ENCODE measurements at regions of chr15 and their contacts with region 1.

Region 1: DNA sequence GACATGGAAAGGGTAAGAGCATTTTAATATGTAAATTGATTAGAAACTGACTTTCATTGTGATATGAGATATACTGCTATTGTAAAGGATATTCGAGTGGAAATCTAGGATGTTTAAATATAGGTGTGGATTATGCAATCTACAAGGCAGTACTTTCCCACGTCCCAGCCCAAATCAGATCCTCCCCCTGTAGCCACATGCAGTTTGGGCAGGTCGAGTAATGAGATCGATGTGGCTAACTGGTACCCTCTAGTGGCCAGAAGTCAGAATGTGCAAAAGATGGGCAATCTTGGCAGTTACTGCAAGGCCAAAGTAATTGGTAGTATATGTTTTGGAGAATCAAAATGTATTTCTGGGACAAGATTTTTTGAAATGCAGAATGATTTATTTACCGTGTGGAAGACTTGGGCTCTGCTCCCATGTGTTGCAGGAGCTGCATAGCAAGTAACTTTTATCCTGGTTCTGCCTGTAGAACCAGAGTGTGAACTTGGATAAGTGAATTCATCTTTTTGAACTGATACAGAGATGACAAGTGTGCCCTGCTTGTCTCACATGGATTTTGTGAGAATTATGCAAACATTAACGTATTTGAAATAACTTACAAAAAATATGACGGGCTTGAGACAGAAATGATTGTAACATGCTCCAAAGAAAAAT is 94.5 kb upstream of the ADAMTSL3 start:
- DNase-seq: peak; percentile 49
- H3K4me3 ChIP-seq: no peak overlapping the region
- CTCF ChIP-seq: peak; percentile 87

Region 2: GRCh38 chr15:83248151-83249029 is 311.0 kb before region 1 on chr15:
- in situ Hi-C with region 1: loop called (anchors 10 kb)
- DNase-seq: peak; percentile 65
- H3K4me3 ChIP-seq: no peak overlapping the region
- CTCF ChIP-seq: peak; percentile 82

Region 3: GRCh38 chr15:83446904-83447709 is 112.3 kb before region 1 on chr15 and contains the start of gene SH3GL3:
- in situ Hi-C with region 1: loop called (anchors 25 kb)
- DNase-seq: peak; percentile 20
- H3K4me3 ChIP-seq: peak within 1 kb of the TSS; percentile 50
- CTCF ChIP-seq: peak; percentile 50

Measured in astrocyte of the cerebellum (primary cell).